Caco-2 (cell line): ENCODE measurements at regions of chr3 and their contacts with region 1.

Region 1: DNA sequence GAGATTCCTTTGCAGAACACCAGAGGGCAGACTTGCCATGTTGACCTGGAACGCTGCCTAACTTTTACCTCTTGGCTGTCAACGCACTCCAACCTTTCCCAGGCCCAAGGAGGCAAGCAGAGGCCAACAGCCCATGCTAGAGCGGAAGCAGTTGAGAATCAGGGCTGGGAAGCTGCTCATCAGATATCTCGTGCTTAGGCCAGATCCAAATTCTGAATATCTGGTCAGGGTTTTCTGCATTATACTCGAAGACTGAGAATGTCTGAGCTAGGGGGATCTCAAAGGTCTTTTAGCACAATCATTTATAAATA is 2.5 kb downstream of the XIRP1 start:
- DNase-seq: peak; percentile 70 to 75
- H3K4me3 ChIP-seq: no peak overlapping the region
- H3K4me3 Mint-ChIP-seq: no peak overlapping the region
- H3K27ac Mint-ChIP-seq: peak overlapping the region; percentile 22
- H3K4me1 ChIP-seq: peaks cover 26% of the 10 kb centered on the region
- H3K4me1 Mint-ChIP-seq: peaks cover 13% of the 10 kb centered on the region
- H3K27me3 ChIP-seq: no peaks in the 10 kb centered on the region
- H3K27me3 Mint-ChIP-seq: no peaks in the 10 kb centered on the region
- CTCF ChIP-seq: peak; percentile 79 to 85

Region 2: DNA sequence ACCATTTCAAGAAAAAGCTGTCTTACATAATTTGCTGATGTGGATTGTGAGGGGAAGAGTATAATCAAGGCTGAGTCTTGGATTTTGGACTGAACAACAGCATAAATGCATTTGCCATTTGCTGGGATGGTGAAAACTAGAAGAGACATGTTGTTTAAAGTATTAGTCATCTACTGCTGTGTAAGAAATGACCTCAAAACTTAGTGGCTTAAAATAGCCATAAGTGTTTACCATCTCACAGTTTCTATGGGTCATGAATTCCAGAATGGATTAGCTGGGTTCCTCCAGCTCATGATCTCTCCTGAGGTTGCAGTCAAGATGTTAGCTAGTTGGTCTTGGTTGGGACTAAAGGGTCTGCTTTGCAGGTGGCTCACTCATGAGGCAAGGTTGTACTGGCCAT is 204.3 kb before region 1 on chr3:
- CTCF ChIA-PET with region 1: no interaction called
- POLR2A ChIA-PET with region 1: no interaction called
- intact Hi-C with region 1: no loop called
- DNase-seq: no peak
- H3K4me3 ChIP-seq: no peak overlapping the region
- H3K4me3 Mint-ChIP-seq: no peak overlapping the region
- H3K27ac Mint-ChIP-seq: no peak overlapping the region
- H3K4me1 ChIP-seq: no peaks in the 10 kb centered on the region
- H3K4me1 Mint-ChIP-seq: no peaks in the 10 kb centered on the region
- H3K27me3 ChIP-seq: no peaks in the 10 kb centered on the region; the same call in 1 of the 2 replicates
- H3K27me3 Mint-ChIP-seq: peaks cover 14% of the 10 kb centered on the region
- CTCF ChIP-seq: no peak

Region 3: GRCh38 chr3:39051647-39052561 is 138.0 kb before region 1 on chr3 and contains the starts of genes SCN11A and WDR48:
- CTCF ChIA-PET with region 1: no interaction called
- POLR2A ChIA-PET with region 1: no interaction called
- intact Hi-C with region 1: no loop called
- DNase-seq: peak; percentile 90 to 92
- H3K4me3 ChIP-seq: peak within 1 kb of the TSS; percentile 80
- H3K4me3 Mint-ChIP-seq: peak within 1 kb of the TSS; percentile 89
- H3K27ac Mint-ChIP-seq: peak within 1 kb of the TSS; percentile 91
- H3K4me1 ChIP-seq: no peaks in the 10 kb centered on the region
- H3K4me1 Mint-ChIP-seq: no peaks in the 10 kb centered on the region
- H3K27me3 ChIP-seq: no peaks in the 10 kb centered on the region
- H3K27me3 Mint-ChIP-seq: peaks cover 5% of the 10 kb centered on the region
- CTCF ChIP-seq: no peak
- total RNA-seq, gene SCN11A: 0.12 TPM in 1 of 2 replicates, not detected in the other
- total RNA-seq, gene WDR48: 27.6 and 28.4 TPM in 2 replicates

Region 4: DNA sequence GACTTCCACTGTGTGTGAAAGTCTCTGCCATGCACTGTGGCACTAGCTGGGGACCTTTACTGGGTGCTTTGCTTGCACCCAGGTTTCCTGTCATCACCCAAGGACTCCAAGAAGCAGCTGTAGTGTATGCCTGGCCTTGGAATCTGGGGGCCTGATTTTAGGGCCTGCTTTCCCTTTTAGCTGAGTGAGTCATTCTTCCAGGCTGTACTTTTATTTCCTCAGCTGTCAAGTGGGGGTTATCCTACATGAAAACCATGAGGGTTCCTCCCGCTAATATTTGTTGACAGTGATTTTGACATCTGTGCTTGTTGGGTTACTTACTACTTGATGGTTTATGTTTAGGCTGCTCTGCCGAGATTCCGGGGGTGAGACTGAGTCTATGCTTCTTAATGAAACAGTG is 101.0 kb before region 1 on chr3:
- CTCF ChIA-PET with region 1: interaction called, 11 read pairs
- POLR2A ChIA-PET with region 1: no interaction called
- intact Hi-C with region 1: no loop called
- DNase-seq: no peak
- H3K4me3 ChIP-seq: no peak overlapping the region
- H3K4me3 Mint-ChIP-seq: no peak overlapping the region
- H3K27ac Mint-ChIP-seq: no peak overlapping the region
- H3K4me1 ChIP-seq: no peaks in the 10 kb centered on the region
- H3K4me1 Mint-ChIP-seq: no peaks in the 10 kb centered on the region
- H3K27me3 ChIP-seq: no peaks in the 10 kb centered on the region
- H3K27me3 Mint-ChIP-seq: no peaks in the 10 kb centered on the region
- CTCF ChIP-seq: no peak

Region 5: DNA sequence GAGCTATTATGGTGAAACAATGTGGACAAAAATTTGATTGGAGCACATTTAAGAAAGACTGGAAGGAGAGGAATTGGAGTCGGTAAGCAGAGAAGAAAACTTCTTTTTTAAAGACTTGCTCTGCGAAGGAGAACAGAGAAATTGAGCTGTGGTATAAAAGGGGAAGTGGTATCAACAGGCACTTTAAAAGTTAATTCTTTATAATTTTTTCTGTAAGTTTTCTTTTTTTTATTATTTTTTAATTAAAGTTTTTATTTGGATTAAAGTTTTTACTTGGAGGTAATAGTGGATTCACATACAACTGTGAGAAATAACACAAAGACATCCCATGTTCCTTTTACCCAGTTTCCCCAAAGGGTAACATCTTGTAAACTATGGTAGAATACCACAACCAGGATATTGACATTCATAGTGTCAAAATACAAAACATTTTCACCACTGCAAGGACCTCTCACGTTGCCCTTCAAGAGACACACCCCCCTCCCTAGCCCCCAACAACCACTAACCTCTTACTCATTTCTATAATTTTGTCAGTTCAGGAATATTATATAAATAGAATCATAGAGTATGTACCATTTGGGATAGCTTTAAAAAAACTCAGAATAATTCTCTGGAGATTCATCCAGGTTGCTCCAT is 36.3 kb after region 1 on chr3:
- CTCF ChIA-PET with region 1: no interaction called
- POLR2A ChIA-PET with region 1: no interaction called
- intact Hi-C with region 1: no loop called
- DNase-seq: no peak
- H3K4me3 ChIP-seq: no peak overlapping the region
- H3K4me3 Mint-ChIP-seq: no peak overlapping the region
- H3K27ac Mint-ChIP-seq: no peak overlapping the region
- H3K4me1 ChIP-seq: no peaks in the 10 kb centered on the region
- H3K4me1 Mint-ChIP-seq: no peaks in the 10 kb centered on the region
- H3K27me3 ChIP-seq: no peaks in the 10 kb centered on the region
- H3K27me3 Mint-ChIP-seq: peaks cover 12% of the 10 kb centered on the region
- CTCF ChIP-seq: no peak

Region 6: GRCh38 chr3:39279745-39280517 is 90.0 kb after region 1 on chr3 and contains the start of gene CX3CR1:
- CTCF ChIA-PET with region 1: no interaction called
- POLR2A ChIA-PET with region 1: no interaction called
- intact Hi-C with region 1: no loop called
- DNase-seq: no peak
- H3K4me3 ChIP-seq: no peak within 1 kb of the TSS
- H3K4me3 Mint-ChIP-seq: no peak within 1 kb of the TSS
- H3K27ac Mint-ChIP-seq: no peak within 1 kb of the TSS
- H3K4me1 ChIP-seq: peaks cover 14% of the 10 kb centered on the region
- H3K4me1 Mint-ChIP-seq: peaks cover 13% of the 10 kb centered on the region
- H3K27me3 ChIP-seq: no peaks in the 10 kb centered on the region
- H3K27me3 Mint-ChIP-seq: peaks cover 2% of the 10 kb centered on the region
- CTCF ChIP-seq: no peak
- total RNA-seq, gene CX3CR1: 0.61 TPM in 1 of 2 replicates, not detected in the other

Region 7: DNA sequence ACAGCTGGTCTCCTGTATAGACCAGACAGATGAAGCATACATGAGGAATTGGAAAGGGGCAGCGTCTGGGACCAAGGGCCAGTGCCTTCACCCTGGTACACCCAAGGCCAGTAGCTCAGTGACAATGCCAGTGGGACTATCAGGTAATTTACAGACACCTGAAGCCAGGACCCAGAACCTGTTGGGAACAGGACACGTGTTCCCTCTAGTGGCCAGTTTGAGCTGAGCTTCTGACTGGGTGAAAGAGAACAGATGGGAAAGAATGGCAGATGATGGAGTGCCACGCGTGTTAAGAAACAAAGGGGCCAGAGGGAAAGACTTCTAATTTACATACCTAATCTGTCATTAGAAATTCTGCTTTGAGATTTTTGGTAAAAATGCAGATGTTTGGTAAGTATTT is 188.2 kb after region 1 on chr3:
- CTCF ChIA-PET with region 1: interaction called, 10 read pairs
- POLR2A ChIA-PET with region 1: no interaction called
- intact Hi-C with region 1: loop called (anchors 1 kb)
- DNase-seq: peak; percentile 67 to 68
- H3K4me3 ChIP-seq: no peak overlapping the region
- H3K4me3 Mint-ChIP-seq: no peak overlapping the region
- H3K27ac Mint-ChIP-seq: no peak overlapping the region
- H3K4me1 ChIP-seq: peaks cover 15% of the 10 kb centered on the region
- H3K4me1 Mint-ChIP-seq: no peaks in the 10 kb centered on the region
- H3K27me3 ChIP-seq: no peaks in the 10 kb centered on the region
- H3K27me3 Mint-ChIP-seq: no peaks in the 10 kb centered on the region
- CTCF ChIP-seq: peak; percentile 63 to 87